Psoas muscle (tissue), 8 donors: ENCODE measurements at regions of chr12 and their contacts with region 1.

Region 1: GRCh38 chr12:6688999-6689882 is at the start of gene ZNF384:
- DNase-seq: peak; percentile 96 to 98
- ATAC-seq: peak; percentile 90 to 92 (median 92)
- H3K4me3 ChIP-seq: peak within 1 kb of the TSS; percentile 79
- H3K27ac ChIP-seq: peak within 1 kb of the TSS; percentile 99
- H3K4me1 ChIP-seq: peaks cover 21% of the 10 kb centered on the region
- H3K27me3 ChIP-seq: no peaks in the 10 kb centered on the region
- CTCF ChIP-seq: peak; percentile 6
- total RNA-seq, gene ZNF384: 25.4 to 37.9 (median 27.9) TPM

Region 2: GRCh38 chr12:6493497-6494257 is 195.6 kb before region 1 on chr12 and contains the start of gene NCAPD2:
- intact Hi-C with region 1: loop called in 1 of 2 experiments (anchors 10 kb)
- DNase-seq: peak; percentile 94 to 97
- ATAC-seq: peak; percentile 94
- H3K4me3 ChIP-seq: peak within 1 kb of the TSS; percentile 89
- H3K27ac ChIP-seq: peak within 1 kb of the TSS; percentile 99
- H3K4me1 ChIP-seq: peaks cover 21% of the 10 kb centered on the region
- H3K27me3 ChIP-seq: no peaks in the 10 kb centered on the region
- CTCF ChIP-seq: peak; percentile 22
- total RNA-seq, gene NCAPD2: 10.1 to 13.4 (median 11.2) TPM

Region 3: DNA sequence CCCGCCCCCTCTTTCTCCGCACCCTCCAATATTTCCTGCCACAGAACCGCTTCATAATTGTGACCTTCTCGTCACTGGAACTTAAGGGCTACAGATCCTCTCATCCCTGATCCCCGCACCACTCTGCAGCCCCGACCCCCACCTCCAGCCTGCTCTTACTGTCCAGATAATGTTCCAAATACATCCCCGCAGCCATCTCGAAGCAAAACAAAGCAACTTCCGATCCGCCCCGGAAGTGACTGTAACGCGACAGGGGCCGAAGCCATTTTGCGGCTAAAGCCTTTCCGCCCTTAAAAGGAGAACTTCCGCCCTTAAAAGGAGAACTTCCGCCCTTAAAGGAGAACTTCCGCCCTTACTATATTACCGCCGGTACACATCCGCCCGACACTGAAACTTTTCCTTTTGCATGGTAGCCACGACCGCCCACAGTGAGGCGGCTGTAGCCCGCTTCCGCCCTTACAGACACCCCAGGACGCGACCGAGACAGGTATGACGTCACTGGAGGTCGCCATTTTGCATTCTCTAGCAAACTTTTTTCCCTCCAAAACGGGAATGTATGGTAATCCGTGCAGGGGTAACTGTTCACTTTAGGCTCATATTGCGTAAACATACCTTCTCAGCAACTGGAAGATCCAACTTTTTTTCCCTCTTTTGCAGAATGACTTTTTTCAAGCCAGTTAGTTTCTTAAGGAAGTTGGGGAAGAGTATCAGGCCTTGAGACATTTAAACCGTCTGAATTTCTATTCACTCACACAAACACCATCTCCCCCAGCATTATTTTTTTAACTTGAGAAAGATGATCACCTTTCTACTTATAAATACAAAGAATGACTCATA is 26.1 kb before region 1 on chr12 and contains the start of gene ING4:
- intact Hi-C with region 1: loop called in 1 of 2 experiments (anchors 1 kb)
- DNase-seq: peak; percentile 97 to 98
- ATAC-seq: peak; percentile 100
- H3K4me3 ChIP-seq: peak within 1 kb of the TSS; percentile 77
- H3K27ac ChIP-seq: peak within 1 kb of the TSS; percentile 86
- H3K4me1 ChIP-seq: peaks cover 11% of the 10 kb centered on the region
- H3K27me3 ChIP-seq: no peaks in the 10 kb centered on the region
- CTCF ChIP-seq: no peak
- total RNA-seq, gene ING4: 12.7 to 29.6 (median 16.9) TPM

Region 4: DNA sequence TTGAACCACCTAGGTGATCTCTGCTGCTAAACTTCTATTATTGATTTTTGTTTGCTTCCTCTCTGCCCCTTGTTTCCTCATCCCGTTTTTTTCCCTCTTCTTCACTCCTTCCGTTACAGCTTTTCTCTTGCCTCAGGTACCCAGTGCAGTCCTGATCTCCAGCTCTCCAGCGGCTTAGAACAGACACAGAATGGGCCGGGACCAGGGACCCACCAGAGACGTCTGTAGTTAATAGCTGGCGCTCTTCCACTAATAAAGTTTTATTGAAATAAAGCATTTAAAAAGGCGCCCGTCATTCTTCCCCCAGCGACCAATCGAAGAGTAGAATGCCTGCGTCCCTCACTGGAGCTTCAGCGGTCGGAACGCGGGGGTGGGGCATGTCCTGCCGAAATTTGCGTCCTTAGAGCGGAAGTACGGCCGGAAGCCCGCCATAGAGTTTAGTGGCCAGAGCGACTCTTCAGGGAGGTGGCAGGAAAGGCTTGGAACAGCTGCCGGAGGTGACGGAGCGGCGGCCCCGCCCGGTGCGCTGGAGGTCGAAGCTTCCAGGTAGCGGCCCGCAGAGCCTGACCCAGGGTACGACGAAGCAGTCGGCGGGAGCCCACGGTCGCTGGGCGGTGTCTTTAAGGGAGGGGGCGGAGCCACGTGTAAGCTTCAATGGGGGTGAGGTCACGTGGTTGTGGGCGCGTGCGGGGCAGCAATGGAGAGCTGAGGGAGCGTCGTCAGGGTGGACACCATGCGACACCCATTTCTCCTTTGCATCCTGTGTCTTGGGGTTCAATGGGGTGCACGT is 34.6 kb after region 1 on chr12 and contains the start of gene COPS7A:
- intact Hi-C with region 1: loop called in 1 of 2 experiments (anchors 5 kb)
- DNase-seq: peak; percentile 99
- ATAC-seq: peak; percentile 97 to 99 (median 98)
- H3K4me3 ChIP-seq: peak within 1 kb of the TSS; percentile 68
- H3K27ac ChIP-seq: peak within 1 kb of the TSS; percentile 90
- H3K4me1 ChIP-seq: peaks cover 11% of the 10 kb centered on the region
- H3K27me3 ChIP-seq: peaks cover 0 to 5% (median 0%) of the 10 kb centered on the region in 3 donors
- CTCF ChIP-seq: no peak
- total RNA-seq, gene COPS7A: 72.3 to 86.2 (median 77.1) TPM